ENCODE measurements at regions of chr4 and their contacts with region 1.

Region 1: GRCh38 chr4:153142700-153143438 is 61.4 kb upstream of the TRIM2 start:
- DNase-seq: peak; percentile 72
- H3K4me3 ChIP-seq: no peak overlapping the region
- H3K27ac ChIP-seq: no peak overlapping the region
- H3K4me1 ChIP-seq: no peaks in the 10 kb centered on the region
- CTCF ChIP-seq: peak; percentile 87

Region 2: DNA sequence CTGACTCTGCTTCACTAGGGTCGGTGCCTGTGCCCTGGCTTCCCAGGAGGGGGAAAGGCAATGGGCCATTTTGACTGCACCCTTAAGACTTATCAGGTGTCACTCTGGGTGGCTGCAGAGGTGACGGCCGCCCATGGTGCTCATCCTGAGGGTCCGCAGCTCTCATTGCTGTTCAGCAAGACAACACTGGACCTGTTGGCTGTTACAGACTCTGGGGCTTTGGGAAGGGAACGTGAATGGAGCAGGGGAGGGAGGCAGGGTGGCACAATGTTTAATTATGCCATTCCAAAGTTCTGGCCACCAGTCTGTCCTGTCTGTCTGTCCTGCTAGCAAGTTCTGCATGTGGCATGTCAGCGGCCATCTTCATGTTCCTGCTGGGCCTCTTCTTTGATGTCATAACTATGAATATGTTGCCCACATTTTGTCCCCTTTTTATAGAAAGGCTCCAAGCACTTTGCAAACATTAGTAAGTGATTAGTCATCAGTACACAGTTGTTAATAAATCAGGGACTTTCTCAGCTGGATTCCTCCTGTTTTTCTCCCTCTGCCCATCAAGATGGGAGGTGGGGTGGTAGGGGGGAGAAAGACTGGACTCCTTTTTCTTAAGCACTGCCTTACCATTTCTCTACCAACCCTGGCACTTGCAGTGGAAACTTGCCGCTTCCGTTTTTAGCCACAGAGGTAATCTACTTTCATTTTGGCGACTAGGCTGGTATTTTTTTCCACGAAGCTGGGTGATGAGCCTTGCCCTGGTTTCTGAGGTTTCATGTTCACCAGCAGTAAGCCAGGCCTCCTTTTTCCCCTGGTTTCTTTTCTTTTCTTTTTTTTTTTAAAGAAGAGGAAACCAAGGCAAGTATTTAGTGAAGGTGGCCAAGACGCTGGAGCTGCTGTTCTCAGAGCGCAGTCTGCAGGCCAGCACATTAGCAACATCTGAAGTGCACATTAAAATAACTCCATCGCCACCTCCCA is 27.3 kb before region 1 on chr4:
- CTCF ChIA-PET with region 1: no interaction called
- POLR2A ChIA-PET with region 1: no interaction called
- intact Hi-C with region 1: no loop called
- DNase-seq: peak; percentile 80
- H3K4me3 ChIP-seq: peak overlapping the region; percentile 51
- H3K27ac ChIP-seq: peak overlapping the region; percentile 12
- H3K4me1 ChIP-seq: peaks cover 20% of the 10 kb centered on the region
- CTCF ChIP-seq: no peak

Region 3: GRCh38 chr4:153318696-153319320 is 175.9 kb after region 1 on chr4:
- CTCF ChIA-PET with region 1: interaction called, 3 read pairs
- POLR2A ChIA-PET with region 1: interaction called, 4 read pairs
- intact Hi-C with region 1: loop called (anchors 1 kb)
- DNase-seq: peak; percentile 68
- H3K4me3 ChIP-seq: no peak overlapping the region
- H3K27ac ChIP-seq: no peak overlapping the region
- H3K4me1 ChIP-seq: peaks cover 11% of the 10 kb centered on the region
- CTCF ChIP-seq: peak; percentile 96

Region 4: GRCh38 chr4:153573881-153574802 is 431.3 kb after region 1 on chr4:
- CTCF ChIA-PET with region 1: no interaction called
- POLR2A ChIA-PET with region 1: no interaction called
- intact Hi-C with region 1: loop called (anchors 2 kb)
- DNase-seq: peak; percentile 83
- H3K4me3 ChIP-seq: peak overlapping the region; percentile 42
- H3K27ac ChIP-seq: peak overlapping the region; percentile 85
- H3K4me1 ChIP-seq: peaks cover 92% of the 10 kb centered on the region
- CTCF ChIP-seq: peak; percentile 85

Region 5: GRCh38 chr4:153750197-153750817 is 607.4 kb after region 1 on chr4:
- CTCF ChIA-PET with region 1: no interaction called
- POLR2A ChIA-PET with region 1: no interaction called
- intact Hi-C with region 1: loop called (anchors 5 kb)
- DNase-seq: peak; percentile 83
- H3K4me3 ChIP-seq: no peak overlapping the region
- H3K27ac ChIP-seq: no peak overlapping the region
- H3K4me1 ChIP-seq: no peaks in the 10 kb centered on the region
- CTCF ChIP-seq: peak; percentile 90